ENCODE measurements at regions of chr5 and their contacts with region 1.

Region 1: DNA sequence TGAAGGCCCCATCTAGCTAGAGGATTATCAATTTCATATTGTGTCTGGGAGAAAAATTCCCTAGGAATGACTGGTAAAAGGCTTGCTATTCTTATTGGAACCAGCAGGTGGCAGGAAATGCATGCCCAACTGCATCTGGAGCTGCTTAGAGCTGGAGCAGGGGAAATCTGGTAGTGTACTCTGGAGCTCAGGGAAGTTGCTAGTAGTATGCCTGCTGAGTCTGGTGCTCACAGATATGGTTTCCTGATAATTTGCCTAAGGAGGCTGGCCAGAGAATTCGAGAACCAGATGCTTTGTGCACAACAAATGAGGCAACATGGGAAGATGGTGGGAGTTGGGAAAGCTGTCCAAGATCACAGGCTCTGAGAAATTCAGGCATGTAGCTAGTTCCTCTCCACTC is 53.7 kb downstream of the G3BP1 start:
- DNase-seq: peak; percentile 17
- ATAC-seq: peak; percentile 91
- H3K4me3 ChIP-seq: no peak overlapping the region
- H3K27ac ChIP-seq: no peak overlapping the region
- H3K4me1 ChIP-seq: no peaks in the 10 kb centered on the region
- H3K27me3 ChIP-seq: no peaks in the 10 kb centered on the region
- CTCF ChIP-seq: peak; percentile 76 to 95 (median 84)
- EP300 ChIP-seq: no peak
- POLR2A ChIP-seq: no peak
- RAD21 ChIP-seq: peak; percentile 98

Region 2: GRCh38 chr5:151896031-151896691 is 70.7 kb after region 1 on chr5:
- CTCF ChIA-PET with region 1: interaction called, 15 read pairs
- POLR2A ChIA-PET with region 1: no interaction called
- RAD21 ChIA-PET with region 1: interaction called, 5 read pairs
- SMC1A ChIA-PET with region 1: interaction called, 15 read pairs
- in situ Hi-C with region 1: no loop called
- intact Hi-C with region 1: no loop called
- DNase-seq: no peak
- ATAC-seq: no peak
- H3K4me3 ChIP-seq: no peak overlapping the region
- H3K27ac ChIP-seq: no peak overlapping the region
- H3K4me1 ChIP-seq: no peaks in the 10 kb centered on the region
- H3K27me3 ChIP-seq: no peaks in the 10 kb centered on the region
- CTCF ChIP-seq: no peak
- EP300 ChIP-seq: no peak
- POLR2A ChIP-seq: no peak
- RAD21 ChIP-seq: no peak

Region 3: GRCh38 chr5:152142840-152143469 is 317.5 kb after region 1 on chr5:
- CTCF ChIA-PET with region 1: interaction called, 338 read pairs
- POLR2A ChIA-PET with region 1: interaction called, 4 read pairs
- RAD21 ChIA-PET with region 1: interaction called, 120 read pairs
- SMC1A ChIA-PET with region 1: interaction called, 223 read pairs
- in situ Hi-C with region 1: loop called (anchors 5 kb)
- intact Hi-C with region 1: loop called (anchors 1 kb)
- DNase-seq: peak; percentile 3
- ATAC-seq: peak; percentile 96
- H3K4me3 ChIP-seq: no peak overlapping the region
- H3K27ac ChIP-seq: no peak overlapping the region
- H3K4me1 ChIP-seq: no peaks in the 10 kb centered on the region
- H3K27me3 ChIP-seq: no peaks in the 10 kb centered on the region; a peak in 1 of 4 replicates
- CTCF ChIP-seq: peak; percentile 90 to 92 (median 90)
- EP300 ChIP-seq: no peak
- POLR2A ChIP-seq: no peak
- RAD21 ChIP-seq: peak; percentile 86

Region 4: DNA sequence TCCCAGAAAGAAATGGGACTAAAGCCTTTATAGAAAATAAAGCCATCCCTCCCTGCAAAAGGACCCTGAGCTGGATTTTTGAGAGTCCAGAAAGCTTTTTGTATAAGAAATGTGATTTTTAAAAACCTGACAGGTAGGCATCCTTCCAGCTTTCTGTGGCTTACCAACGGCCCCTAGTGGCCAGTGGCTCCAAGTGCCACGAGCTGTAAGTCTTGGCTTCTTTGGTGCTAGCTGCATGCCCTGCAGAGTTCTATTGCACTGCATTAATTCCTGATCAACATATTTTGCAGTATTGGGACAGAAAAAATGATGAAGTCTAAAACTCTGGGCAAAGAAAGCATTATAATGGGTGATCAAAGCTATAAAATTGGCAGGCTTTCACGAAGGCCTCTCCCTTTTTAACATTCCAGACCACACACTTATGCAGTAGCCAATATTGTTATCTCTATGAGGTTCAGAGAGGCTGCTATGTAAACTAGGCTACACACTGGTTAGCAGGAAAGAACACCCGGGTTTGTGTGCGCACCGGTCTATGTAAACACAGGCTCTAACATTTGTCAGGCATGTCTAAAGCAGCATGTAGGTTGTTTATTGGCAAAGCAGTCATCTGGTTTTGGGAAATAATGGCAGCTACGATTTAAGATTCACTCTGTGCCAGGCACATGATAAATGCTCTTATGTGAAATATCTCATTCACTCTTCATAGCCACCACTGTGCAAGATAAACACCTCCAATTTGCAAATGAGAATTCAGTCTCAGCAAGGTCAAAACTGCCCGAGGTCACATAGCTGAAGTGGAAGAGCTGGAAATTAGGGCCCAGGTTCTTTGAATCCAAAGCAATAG is 524.5 kb after region 1 on chr5:
- CTCF ChIA-PET with region 1: interaction called, 85 read pairs
- POLR2A ChIA-PET with region 1: no interaction called
- RAD21 ChIA-PET with region 1: interaction called, 51 read pairs
- SMC1A ChIA-PET with region 1: interaction called, 38 read pairs
- in situ Hi-C with region 1: no loop called
- intact Hi-C with region 1: loop called (anchors 1 kb)
- DNase-seq: no peak
- ATAC-seq: peak; percentile 92
- H3K4me3 ChIP-seq: no peak overlapping the region
- H3K27ac ChIP-seq: no peak overlapping the region
- H3K4me1 ChIP-seq: no peaks in the 10 kb centered on the region
- H3K27me3 ChIP-seq: no peaks in the 10 kb centered on the region
- CTCF ChIP-seq: peak; percentile 82 to 92 (median 90)
- EP300 ChIP-seq: no peak
- POLR2A ChIP-seq: no peak
- RAD21 ChIP-seq: peak; percentile 69

Region 5: DNA sequence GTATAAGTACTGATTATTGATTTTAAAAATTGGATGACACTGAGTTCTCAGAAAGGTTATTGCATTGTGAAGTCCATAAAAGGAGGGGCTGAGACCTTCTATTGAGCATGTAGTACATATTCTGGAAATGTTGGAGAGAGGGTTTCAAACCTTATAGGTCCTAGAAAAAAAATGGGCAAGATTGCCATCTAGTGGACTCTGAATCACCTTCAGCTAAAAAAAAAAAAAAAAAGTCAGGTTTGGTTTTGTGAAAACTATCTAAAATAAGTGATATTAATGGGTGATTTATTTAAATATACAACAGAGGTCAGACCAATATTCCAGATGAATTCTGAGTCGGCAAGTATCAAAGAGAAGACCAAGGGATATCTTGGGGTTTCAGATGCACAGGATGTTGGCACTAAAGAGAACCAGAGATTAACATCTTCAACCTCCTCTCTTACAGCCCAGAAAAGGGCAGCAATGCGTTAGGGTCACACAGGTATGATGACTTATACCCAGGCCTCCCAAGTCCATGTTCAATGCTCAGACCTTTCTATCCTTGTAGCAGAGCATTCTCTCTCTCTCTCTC is 689.5 kb after region 1 on chr5:
- CTCF ChIA-PET with region 1: interaction called, 12 read pairs
- POLR2A ChIA-PET with region 1: no interaction called
- RAD21 ChIA-PET with region 1: interaction called, 10 read pairs
- SMC1A ChIA-PET with region 1: interaction called, 3 read pairs
- in situ Hi-C with region 1: no loop called
- intact Hi-C with region 1: no loop called
- DNase-seq: no peak
- ATAC-seq: peak; percentile 56; the same call in 2 of the 3 replicates
- H3K4me3 ChIP-seq: no peak overlapping the region
- H3K27ac ChIP-seq: no peak overlapping the region
- H3K4me1 ChIP-seq: no peaks in the 10 kb centered on the region
- H3K27me3 ChIP-seq: no peaks in the 10 kb centered on the region; a peak in 1 of 4 replicates
- CTCF ChIP-seq: peak; percentile 36 to 41 (median 39); a peak in 4 of 6 replicates
- EP300 ChIP-seq: no peak
- POLR2A ChIP-seq: no peak
- RAD21 ChIP-seq: peak; percentile 36

Measured in GM12878 (cell line).